IMR-90 (cell line): ENCODE measurements at regions of chrX and their contacts with region 1.

Region 1: GRCh38 chrX:130165703-130166502 is at the start of gene AIFM1:
- DNase-seq: peak; percentile 94
- ATAC-seq: peak; percentile 96
- H3K4me3 ChIP-seq: peak within 1 kb of the TSS; percentile 67
- H3K27ac ChIP-seq: peak within 1 kb of the TSS; percentile 85
- H3K4me1 ChIP-seq: no peaks in the 10 kb centered on the region
- H3K27me3 ChIP-seq: no peaks in the 10 kb centered on the region
- CTCF ChIP-seq: no peak
- POLR2A ChIP-seq: no peak
- RAD21 ChIP-seq: no peak
- total RNA-seq, gene AIFM1: 22.0 and 31.1 TPM in 2 replicates

Region 2: DNA sequence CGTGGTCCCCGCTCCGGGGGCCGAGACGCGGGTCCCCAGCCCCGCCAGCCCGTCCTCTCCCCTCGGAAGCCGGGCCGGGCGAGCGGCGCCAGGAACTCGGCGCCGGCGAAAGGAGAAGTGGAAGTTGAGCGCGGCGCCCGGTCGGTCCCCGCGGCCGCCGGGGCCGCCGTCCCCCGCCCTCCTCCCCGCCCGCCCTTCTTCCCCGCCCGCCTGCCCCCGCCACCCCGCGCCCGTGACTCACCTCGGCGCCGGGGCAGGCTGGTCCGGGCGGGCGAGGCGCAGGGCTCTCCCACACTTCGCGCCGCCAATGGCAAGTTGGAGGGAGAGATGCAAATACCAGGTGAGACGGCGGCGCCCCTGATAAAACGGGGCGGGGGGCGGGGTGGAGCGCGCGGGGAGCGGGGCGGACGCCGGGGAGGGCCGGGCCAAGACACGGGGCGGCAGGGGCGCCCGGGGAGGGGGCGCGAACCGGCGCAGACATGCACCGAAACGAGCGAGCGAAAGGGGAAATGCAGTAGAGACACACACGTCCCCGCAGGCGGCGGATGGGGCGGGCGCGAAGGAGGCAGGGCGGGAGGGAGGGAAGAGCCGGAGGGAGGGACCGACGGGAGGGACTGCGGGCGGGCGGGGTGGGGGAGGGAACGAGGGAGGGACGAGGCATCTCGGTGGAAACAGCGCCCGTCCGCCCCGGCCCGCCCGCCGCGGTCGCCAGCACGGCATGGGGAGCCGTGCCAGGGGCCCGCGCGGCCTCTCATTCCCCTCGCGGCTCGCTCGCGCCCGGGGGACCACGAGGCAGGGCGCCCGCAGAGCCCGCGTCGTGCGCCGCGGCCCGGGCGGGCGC is 55.3 kb before region 1 on chrX and contains the start of gene ELF4:
- CTCF ChIA-PET with region 1: no interaction called
- POLR2A ChIA-PET with region 1: no interaction called
- dilution Hi-C with region 1: no loop called
- in situ Hi-C with region 1: no loop called
- intact Hi-C with region 1: loop called (anchors 5 kb)
- DNase-seq: peak; percentile 37
- ATAC-seq: peak; percentile 69
- H3K4me3 ChIP-seq: peak within 1 kb of the TSS; percentile 85
- H3K27ac ChIP-seq: peak within 1 kb of the TSS; percentile 85
- H3K4me1 ChIP-seq: peaks cover 9% of the 10 kb centered on the region; the same call in 1 of the 2 replicates
- H3K27me3 ChIP-seq: no peaks in the 10 kb centered on the region
- CTCF ChIP-seq: no peak
- POLR2A ChIP-seq: no peak
- RAD21 ChIP-seq: no peak
- total RNA-seq, gene ELF4: 10.8 and 10.9 TPM in 2 replicates

Region 3: GRCh38 chrX:130197464-130197863 is 31.6 kb after region 1 on chrX:
- CTCF ChIA-PET with region 1: no interaction called
- POLR2A ChIA-PET with region 1: no interaction called
- dilution Hi-C with region 1: no loop called
- in situ Hi-C with region 1: no loop called
- intact Hi-C with region 1: no loop called
- DNase-seq: no peak
- ATAC-seq: no peak; the same call in 1 of the 2 replicates
- H3K4me3 ChIP-seq: no peak overlapping the region
- H3K27ac ChIP-seq: no peak overlapping the region
- H3K4me1 ChIP-seq: no peaks in the 10 kb centered on the region
- H3K27me3 ChIP-seq: no peaks in the 10 kb centered on the region; the same call in 1 of the 2 replicates
- CTCF ChIP-seq: no peak
- POLR2A ChIP-seq: no peak
- RAD21 ChIP-seq: no peak

Region 4: DNA sequence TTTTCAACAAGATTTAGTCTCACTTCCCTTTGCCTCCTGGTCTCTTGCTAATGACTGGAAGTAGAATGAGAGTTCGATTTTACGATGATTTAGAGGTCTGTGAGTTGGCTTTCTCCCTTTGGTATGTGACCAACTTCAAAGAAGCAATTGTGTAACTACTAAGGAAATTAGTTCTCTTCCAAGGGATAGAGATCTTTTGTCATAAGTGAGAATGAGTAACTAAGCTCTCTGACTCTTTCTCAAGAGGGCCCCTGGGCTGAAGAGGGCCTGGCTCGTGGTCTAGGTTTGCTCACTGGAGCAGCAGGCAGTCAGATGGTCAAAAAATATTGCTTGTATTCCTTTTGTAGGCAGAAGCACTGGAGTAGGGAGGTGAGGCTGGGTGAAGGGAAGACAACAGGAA is 560.8 kb after region 1 on chrX:
- CTCF ChIA-PET with region 1: no interaction called
- POLR2A ChIA-PET with region 1: no interaction called
- dilution Hi-C with region 1: no loop called
- in situ Hi-C with region 1: no loop called
- intact Hi-C with region 1: no loop called
- DNase-seq: peak; percentile 49
- ATAC-seq: no peak
- H3K4me3 ChIP-seq: no peak overlapping the region
- H3K27ac ChIP-seq: no peak overlapping the region
- H3K4me1 ChIP-seq: no peaks in the 10 kb centered on the region
- H3K27me3 ChIP-seq: no peaks in the 10 kb centered on the region
- CTCF ChIP-seq: no peak
- POLR2A ChIP-seq: no peak
- RAD21 ChIP-seq: no peak